Activated B cell treated with CpG ODN at 0.5 μM for 24 hours (primary cell): ENCODE measurements at regions of chr1 and their contacts with region 1.

Region 1: GRCh38 chr1:226687426-226687825 is 51.7 kb downstream of the ITPKB start:
- DNase-seq: no peak
- ATAC-seq: peak; percentile 12
- H3K4me3 Mint-ChIP-seq: peak overlapping the region; percentile 61
- H3K27ac Mint-ChIP-seq: peak overlapping the region; percentile 91
- H3K4me1 Mint-ChIP-seq: peaks cover 100% of the 10 kb centered on the region
- H3K27me3 Mint-ChIP-seq: no peaks in the 10 kb centered on the region
- CTCF ChIP-seq: no peak

Region 2: DNA sequence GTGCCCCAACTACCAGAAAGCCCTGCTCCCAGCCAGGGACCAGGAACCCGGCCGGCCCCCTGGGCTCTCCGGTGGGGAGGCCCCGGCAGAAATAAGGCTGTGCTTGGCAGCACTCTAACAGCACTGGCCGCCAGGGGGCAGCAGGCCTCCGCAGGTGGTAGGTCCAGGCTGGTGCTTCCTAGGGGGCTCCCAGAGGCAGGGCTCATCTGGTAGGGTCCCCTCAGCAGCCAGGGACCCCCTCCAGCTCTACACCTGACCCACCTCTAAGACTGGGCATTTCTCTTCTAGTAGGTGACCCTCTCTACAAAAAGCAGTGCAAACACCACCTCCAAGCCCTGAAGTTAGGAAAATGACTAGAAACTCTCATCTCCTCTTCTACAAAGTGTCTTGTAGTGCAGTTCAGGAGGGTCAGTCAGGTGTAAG is 53.2 kb before region 1 on chr1:
- CTCF ChIA-PET with region 1: interaction called, 36 read pairs
- POLR2A ChIA-PET with region 1: interaction called, 29 read pairs
- intact Hi-C with region 1: loop called (anchors 1 kb)
- DNase-seq: peak; percentile 81
- ATAC-seq: peak; percentile 72
- H3K4me3 Mint-ChIP-seq: no peak overlapping the region
- H3K27ac Mint-ChIP-seq: peak overlapping the region; percentile 60
- H3K4me1 Mint-ChIP-seq: peaks cover 72% of the 10 kb centered on the region
- H3K27me3 Mint-ChIP-seq: no peaks in the 10 kb centered on the region
- CTCF ChIP-seq: peak; percentile 56

Region 3: DNA sequence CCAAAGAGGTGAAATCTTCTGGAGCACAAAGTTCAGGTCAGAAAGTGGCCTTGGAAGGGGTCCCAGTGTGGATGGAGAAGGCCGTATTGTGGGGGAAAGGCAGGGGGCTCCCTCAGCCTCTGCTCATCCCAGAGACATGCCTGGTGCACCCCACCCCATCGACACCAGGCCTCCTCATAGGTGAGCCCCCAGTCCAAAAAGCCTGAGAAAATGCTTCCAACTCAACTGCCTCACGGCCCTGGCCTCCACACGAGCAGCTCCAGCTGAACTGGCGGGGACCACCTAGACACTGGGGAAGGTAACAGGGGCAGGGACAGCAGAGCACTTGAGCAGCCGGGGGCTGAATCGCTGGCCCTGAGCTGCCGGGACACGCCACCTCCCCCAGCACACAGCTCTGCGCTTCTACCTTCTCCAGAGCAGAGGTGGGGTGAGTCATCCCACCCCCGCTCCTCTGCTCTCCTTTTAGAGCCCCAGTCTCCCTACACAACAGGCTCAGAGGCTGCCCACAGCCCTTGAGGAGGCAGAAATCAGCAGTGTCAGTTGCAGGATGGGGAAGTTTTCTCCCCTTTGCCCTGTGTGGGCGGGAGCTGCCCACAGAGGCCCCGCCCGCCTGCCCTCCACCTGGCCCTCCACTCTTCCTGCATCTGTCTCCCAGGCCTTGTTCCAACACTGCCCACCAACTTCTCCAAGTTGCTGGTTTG is 44.4 kb before region 1 on chr1:
- CTCF ChIA-PET with region 1: interaction called, 26 read pairs
- POLR2A ChIA-PET with region 1: interaction called, 451 read pairs
- intact Hi-C with region 1: loop called (anchors 2 kb)
- DNase-seq: peak; percentile 52
- ATAC-seq: peak; percentile 63
- H3K4me3 Mint-ChIP-seq: peak overlapping the region; percentile 67
- H3K27ac Mint-ChIP-seq: peak overlapping the region; percentile 88
- H3K4me1 Mint-ChIP-seq: peaks cover 76% of the 10 kb centered on the region
- H3K27me3 Mint-ChIP-seq: no peaks in the 10 kb centered on the region
- CTCF ChIP-seq: no peak

Region 4: GRCh38 chr1:226649780-226650179 is 37.6 kb before region 1 on chr1:
- CTCF ChIA-PET with region 1: interaction called, 14 read pairs
- POLR2A ChIA-PET with region 1: interaction called, 451 read pairs
- intact Hi-C with region 1: loop called (anchors 2 kb)
- DNase-seq: no peak
- ATAC-seq: no peak
- H3K4me3 Mint-ChIP-seq: no peak overlapping the region
- H3K27ac Mint-ChIP-seq: peak overlapping the region; percentile 11
- H3K4me1 Mint-ChIP-seq: peaks cover 43% of the 10 kb centered on the region
- H3K27me3 Mint-ChIP-seq: no peaks in the 10 kb centered on the region
- CTCF ChIP-seq: no peak

Region 5: DNA sequence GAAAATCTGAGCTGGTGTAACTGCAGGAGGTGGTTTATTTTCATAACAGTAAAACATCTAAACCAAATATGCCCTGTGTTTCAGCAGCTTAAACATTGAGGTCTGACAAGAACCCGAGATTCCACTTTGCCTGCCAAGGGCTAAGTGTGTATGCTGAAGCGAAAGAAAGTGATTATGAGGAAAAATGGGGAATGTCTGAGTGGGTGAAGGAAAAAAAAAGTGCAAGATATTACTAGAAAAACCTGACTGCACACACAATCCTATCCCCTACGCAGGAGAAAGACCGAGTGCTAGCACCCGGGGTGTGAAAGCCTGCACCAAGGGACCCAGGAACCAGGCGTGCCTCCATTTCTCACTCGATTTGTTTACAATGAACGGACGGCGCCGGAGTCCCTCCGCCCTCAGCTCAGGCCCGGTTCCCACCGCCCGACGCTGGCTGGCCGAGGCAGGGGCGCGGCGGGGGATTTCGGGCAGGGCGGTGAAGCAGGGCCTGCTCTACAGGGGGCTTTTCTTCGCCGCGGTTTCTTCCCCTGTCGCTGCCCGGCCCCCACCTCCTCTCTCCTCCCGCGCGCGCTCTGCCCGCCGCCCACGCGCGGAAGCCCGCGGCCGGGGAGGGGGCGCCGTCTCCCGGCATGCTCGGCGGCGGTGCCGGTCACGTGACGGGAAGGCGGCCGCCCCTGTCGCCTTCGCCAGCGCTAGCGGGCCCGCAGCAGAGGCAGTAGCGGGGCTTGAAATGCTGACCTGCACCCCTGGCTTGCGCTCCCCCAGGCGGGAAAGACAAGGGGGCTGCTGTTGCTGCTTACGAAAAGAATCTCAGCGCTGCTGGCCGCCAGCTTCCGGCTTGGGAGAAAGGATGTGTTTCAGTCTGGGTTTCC is 15.8 kb after region 1 on chr1:
- CTCF ChIA-PET with region 1: interaction called, 21 read pairs
- POLR2A ChIA-PET with region 1: interaction called, 199 read pairs
- intact Hi-C with region 1: no loop called
- DNase-seq: peak; percentile 90
- ATAC-seq: peak; percentile 90
- H3K4me3 Mint-ChIP-seq: peak overlapping the region; percentile 76
- H3K27ac Mint-ChIP-seq: peak overlapping the region; percentile 93
- H3K4me1 Mint-ChIP-seq: peaks cover 78% of the 10 kb centered on the region
- H3K27me3 Mint-ChIP-seq: no peaks in the 10 kb centered on the region
- CTCF ChIP-seq: no peak

Region 6: DNA sequence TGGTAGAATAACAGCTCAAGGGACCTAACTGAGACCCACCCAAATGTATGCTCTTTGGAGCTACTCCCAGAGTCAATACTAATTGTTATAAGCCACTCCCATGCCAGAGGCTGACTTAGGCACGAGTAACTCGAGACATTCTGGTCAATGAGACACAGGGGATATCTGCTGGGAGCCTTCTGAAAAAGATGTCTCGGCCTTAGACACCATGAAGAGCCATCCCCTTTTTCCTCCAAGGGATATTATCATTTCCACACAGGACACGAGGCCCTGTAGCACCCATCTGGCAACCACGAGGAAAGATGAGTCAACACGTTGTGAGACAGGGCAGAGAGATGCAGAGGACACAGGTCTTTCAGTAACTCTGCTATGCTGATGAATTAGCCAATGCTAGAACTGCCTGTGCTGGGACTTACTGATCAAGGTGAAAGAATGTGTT is 20.9 kb after region 1 on chr1:
- CTCF ChIA-PET with region 1: interaction called, 8 read pairs
- POLR2A ChIA-PET with region 1: interaction called, 33 read pairs
- intact Hi-C with region 1: no loop called
- DNase-seq: no peak
- ATAC-seq: no peak
- H3K4me3 Mint-ChIP-seq: no peak overlapping the region
- H3K27ac Mint-ChIP-seq: peak overlapping the region; percentile 76
- H3K4me1 Mint-ChIP-seq: peaks cover 85% of the 10 kb centered on the region
- H3K27me3 Mint-ChIP-seq: no peaks in the 10 kb centered on the region
- CTCF ChIP-seq: no peak

Region 7: GRCh38 chr1:226827968-226828513 is 140.6 kb after region 1 on chr1:
- CTCF ChIA-PET with region 1: interaction called, 4 read pairs
- POLR2A ChIA-PET with region 1: interaction called, 3 read pairs
- intact Hi-C with region 1: loop called (anchors 1 kb)
- DNase-seq: peak; percentile 82
- ATAC-seq: peak; percentile 97
- H3K4me3 Mint-ChIP-seq: peak overlapping the region; percentile 58
- H3K27ac Mint-ChIP-seq: peak overlapping the region; percentile 80
- H3K4me1 Mint-ChIP-seq: peaks cover 37% of the 10 kb centered on the region
- H3K27me3 Mint-ChIP-seq: no peaks in the 10 kb centered on the region
- CTCF ChIP-seq: peak; percentile 67

Region 8: GRCh38 chr1:227234998-227235405 is 547.6 kb after region 1 on chr1:
- CTCF ChIA-PET with region 1: no interaction called
- POLR2A ChIA-PET with region 1: no interaction called
- intact Hi-C with region 1: no loop called
- DNase-seq: no peak
- ATAC-seq: no peak
- H3K4me3 Mint-ChIP-seq: no peak overlapping the region
- H3K27ac Mint-ChIP-seq: no peak overlapping the region
- H3K4me1 Mint-ChIP-seq: no peaks in the 10 kb centered on the region
- H3K27me3 Mint-ChIP-seq: peaks cover 14% of the 10 kb centered on the region
- CTCF ChIP-seq: no peak